Thyroid gland (tissue), 4 donors: ENCODE measurements at regions of chr20 and their contacts with region 1.

Region 1: DNA sequence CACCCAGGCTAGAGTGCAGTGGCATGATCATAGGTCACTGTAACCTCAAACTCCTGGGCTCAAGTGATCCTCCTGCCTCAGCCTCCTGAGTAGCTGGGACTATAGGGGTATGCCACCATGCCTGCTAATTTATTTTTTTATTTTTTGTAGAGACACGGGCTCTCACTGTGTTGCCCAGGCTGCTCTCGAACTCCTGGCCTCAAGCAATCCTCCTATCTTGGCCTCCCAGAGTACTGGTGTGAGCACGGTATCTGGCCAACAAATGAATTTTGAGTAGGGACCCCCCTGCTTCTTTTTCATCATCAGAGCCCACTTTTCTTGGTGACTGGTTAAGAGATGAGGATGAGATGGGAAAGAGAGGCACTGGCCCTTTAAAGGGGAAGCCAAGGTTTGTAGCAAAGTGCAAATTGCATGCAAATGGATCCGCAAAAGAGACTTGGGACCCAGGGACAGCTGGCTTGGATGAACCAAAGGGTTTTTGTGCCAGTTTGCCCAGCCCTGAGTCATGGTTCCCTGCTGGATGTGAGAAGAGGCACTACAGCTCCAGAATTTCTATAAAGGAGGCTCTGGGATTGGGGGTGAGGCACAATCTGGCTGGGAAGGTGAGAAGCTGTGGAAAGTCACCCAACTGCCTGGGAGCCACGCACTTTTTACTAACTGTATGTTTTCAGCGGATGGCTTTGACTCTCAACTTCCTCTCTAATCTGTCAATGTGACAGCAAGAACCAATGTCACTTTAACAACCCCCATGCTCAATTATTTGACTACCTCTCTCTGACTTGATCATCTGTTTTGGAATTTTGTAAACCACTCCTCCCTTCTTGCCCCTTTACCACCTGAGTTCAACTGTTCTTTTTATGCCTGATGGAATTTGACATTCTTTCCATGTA is 58.7 kb upstream of the RNF24 start:
- DNase-seq: no peak
- H3K4me3 ChIP-seq: no peak overlapping the region
- H3K27ac ChIP-seq: no peak overlapping the region
- H3K4me1 ChIP-seq: no peaks in the 10 kb centered on the region
- H3K27me3 ChIP-seq: no peaks in the 10 kb centered on the region
- CTCF ChIP-seq: no peak
- POLR2A ChIP-seq: no peak

Region 2: DNA sequence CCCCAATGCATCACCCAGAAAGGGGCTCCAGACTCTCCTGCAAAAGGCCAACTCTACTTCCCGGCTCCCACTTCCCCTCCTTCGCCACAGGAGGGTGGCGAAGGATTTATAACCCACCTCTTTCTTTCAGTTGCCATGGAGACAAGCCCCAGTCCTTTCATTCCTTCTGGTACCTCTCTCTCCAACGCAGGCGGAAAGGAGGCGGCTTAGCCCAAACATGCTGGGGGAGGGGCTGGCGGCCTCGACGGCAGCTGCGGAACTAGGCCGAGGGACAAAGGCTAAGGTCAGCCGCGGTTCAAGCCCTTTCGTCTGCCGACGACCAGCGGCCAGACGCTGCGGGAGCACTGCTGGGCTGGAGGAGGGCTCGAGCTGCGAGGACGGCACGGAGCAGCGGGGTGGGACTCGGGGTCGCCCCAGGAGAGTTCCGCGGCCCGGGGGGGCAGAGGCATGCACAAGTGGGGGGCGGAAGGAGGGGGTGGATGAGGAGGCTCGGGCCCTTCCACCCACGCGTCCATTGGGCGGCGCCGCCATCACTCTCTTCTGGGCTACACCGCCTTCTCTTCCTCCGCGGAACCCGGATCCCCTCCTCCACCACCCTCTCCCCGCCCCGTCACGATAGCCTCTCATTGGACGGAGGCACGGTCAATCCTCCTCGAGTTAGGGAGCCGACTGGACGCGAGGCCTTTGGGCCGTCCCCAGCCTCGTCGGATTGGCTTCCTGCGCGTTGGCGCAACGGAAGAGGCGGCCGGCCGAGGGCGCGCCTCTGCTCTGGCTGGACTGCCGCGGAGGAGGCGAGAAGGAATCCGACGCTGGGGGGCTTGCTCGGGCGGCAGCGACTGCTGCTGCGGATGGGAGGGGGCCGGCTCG is 185.2 kb before region 1 on chr20 and contains the start of gene PANK2:
- intact Hi-C with region 1: loop called (anchors 5 kb)
- DNase-seq: peak; percentile 99
- H3K4me3 ChIP-seq: peak within 1 kb of the TSS; percentile 63 to 99 (median 74)
- H3K27ac ChIP-seq: peak within 1 kb of the TSS; percentile 86 to 96 (median 93)
- H3K4me1 ChIP-seq: peaks cover 29 to 40% of the 10 kb centered on the region in 2 donors
- H3K27me3 ChIP-seq: no peaks in the 10 kb centered on the region
- CTCF ChIP-seq: peak; percentile 12 to 76 (median 52)
- POLR2A ChIP-seq: peak; percentile 73 to 96
- total RNA-seq, gene PANK2: 52.3 to 63.4 (median 61.4) TPM

Region 3: DNA sequence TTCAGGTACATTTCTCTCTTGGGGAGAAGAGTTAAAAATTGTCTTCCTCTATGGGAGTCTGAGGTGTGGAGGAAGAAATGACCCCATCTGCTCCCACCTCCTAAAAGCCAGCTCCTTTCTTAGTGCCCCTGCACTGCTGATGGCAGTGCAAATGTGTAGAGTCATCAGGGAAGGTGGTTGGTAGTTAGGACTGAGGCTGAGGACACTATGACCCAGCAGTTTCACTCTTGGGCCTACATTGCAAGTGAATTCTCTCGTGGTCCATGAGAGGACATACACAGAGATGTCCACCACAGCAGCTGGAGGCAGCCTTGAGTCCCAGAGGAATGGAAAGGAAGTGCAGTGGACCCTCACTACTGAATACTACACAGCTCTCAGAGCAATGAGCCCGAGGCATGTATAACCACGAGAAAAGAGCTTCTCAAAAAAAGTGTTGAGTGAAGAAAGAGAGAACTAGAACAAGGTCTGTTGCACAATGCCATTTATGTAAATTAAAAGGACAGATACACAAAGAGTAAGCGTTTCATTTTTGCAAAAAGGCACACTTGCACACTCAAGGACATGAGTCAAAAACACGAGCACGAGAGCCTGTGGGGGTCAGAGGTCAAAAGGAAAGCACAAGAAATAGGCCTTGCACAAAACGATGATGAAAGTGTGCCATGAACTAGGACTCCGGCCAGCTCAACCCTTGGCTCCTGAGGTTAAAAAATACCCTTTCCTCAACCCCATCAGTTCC is 339.4 kb after region 1 on chr20:
- intact Hi-C with region 1: no loop called
- DNase-seq: no peak
- H3K4me3 ChIP-seq: no peak overlapping the region
- H3K27ac ChIP-seq: no peak overlapping the region
- H3K4me1 ChIP-seq: no peaks in the 10 kb centered on the region
- H3K27me3 ChIP-seq: no peaks in the 10 kb centered on the region
- CTCF ChIP-seq: no peak
- POLR2A ChIP-seq: no peak